Sciatic nerve (tissue), 2 donors: ENCODE measurements at regions of chr15 and their contacts with region 1.

Region 1: GRCh38 chr15:32994810-32995424 is 199.6 kb downstream of the FMN1 start:
- DNase-seq: no peak
- ATAC-seq: no peak

Region 2: DNA sequence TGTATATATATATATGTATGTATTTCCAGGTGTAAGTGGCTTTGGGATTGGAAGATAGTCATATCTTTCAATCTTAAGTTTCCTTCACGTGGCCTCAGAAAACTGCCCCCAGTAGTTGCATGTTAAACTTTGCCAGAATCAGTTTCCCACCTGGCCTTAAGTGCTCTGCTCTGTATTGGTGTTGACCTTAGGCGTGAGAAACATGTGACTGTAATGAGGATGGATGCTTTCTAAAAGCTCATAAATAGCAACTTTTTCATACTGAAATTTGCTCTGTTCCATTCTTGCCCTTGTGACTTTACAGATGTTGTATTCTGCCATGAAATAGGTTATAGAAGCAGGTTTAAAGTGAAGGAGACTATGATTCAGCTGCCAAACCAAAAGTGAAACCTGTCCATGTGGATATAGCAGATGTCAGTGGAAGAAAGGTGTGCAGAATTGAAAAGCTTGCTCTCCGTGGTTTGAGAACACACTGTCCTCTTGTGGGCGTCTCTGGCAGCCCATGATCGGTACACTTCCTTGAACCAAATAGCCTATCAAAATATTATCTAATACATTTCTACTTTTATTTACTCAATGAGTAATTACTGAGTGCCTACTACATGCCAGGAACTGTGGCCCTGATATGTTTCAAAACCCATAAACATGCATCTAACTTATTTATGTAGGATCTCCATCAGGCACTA is 337.6 kb before region 1 on chr15:
- intact Hi-C with region 1: loop called (anchors 5 kb)
- DNase-seq: no peak
- ATAC-seq: no peak

Region 3: GRCh38 chr15:32979710-32980109 is 15.2 kb before region 1 on chr15:
- intact Hi-C with region 1: no loop called
- DNase-seq: no peak
- ATAC-seq: no peak